RWPE1 (cell line): ENCODE measurements at regions of chr12 and their contacts with region 1.

Region 1: GRCh38 chr12:124410354-124411175 is 115.7 kb downstream of the RFLNA start:
- DNase-seq: no peak
- H3K27ac ChIP-seq: peak overlapping the region; percentile 95
- CTCF ChIP-seq: no peak

Region 2: DNA sequence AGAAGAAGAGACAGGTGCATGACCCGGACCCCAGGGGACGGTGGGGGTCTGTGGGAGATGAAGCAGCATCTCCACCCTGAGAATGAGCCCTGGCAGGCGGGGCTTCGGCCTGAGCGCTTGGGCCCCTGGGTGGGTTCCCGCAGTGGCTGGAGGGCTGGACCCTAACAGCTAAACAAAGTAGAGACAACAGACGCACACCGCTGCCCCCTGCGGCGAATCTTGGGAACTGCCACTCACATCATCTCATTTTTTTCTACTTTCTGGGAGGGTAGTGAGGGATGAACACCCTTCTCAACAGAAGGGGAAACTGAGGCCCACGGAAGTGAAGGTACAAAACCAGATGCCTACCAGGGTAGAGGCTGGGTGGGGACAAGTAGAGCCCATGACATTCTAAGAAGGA is 10.9 kb before region 1 on chr12:
- CTCF ChIA-PET with region 1: interaction called, 12 read pairs
- POLR2A ChIA-PET with region 1: no interaction called
- DNase-seq: no peak
- H3K27ac ChIP-seq: peak overlapping the region; percentile 96
- CTCF ChIP-seq: peak; percentile 76